CD8-positive, alpha-beta T cell (primary cell): ENCODE measurements at regions of chr1 and their contacts with region 1.

Region 1: DNA sequence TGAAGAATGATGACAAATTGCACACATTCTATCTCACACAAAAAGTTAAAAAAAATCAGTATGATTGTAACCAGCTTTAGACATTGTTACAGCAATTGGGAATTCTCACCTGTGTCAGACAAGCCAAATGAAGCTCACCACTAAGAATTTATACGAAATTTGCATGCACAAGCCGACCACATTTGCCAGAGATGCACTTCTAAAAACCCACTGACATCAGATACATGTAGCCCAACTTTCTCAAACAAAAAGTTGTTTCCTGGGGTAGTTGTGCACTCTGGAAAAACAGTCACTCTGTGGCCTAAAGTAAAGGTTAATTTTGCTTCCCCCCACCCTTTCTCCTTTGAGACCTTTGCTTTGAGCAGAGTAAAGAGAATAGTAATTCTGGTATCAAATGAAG is 67.9 kb upstream of the IL12RB2 start:
- DNase-seq: no peak
- ATAC-seq: no peak
- H3K4me3 ChIP-seq: no peak overlapping the region
- H3K4me3 Mint-ChIP-seq: no peak overlapping the region
- H3K27ac ChIP-seq: no peak overlapping the region
- H3K27ac Mint-ChIP-seq: no peak overlapping the region
- H3K4me1 ChIP-seq: no peaks in the 10 kb centered on the region
- H3K4me1 Mint-ChIP-seq: no peaks in the 10 kb centered on the region
- H3K27me3 ChIP-seq: no peaks in the 10 kb centered on the region
- H3K27me3 Mint-ChIP-seq: no peaks in the 10 kb centered on the region
- CTCF ChIP-seq: no peak

Region 2: GRCh38 chr1:67256291-67257172 is 16.8 kb after region 1 on chr1:
- CTCF ChIA-PET with region 1: interaction called, 3 read pairs
- POLR2A ChIA-PET with region 1: no interaction called
- intact Hi-C with region 1: loop called in 1 of 2 experiments (anchors 2 kb)
- DNase-seq: no peak
- ATAC-seq: no peak
- H3K4me3 ChIP-seq: no peak overlapping the region
- H3K4me3 Mint-ChIP-seq: no peak overlapping the region
- H3K27ac ChIP-seq: no peak overlapping the region
- H3K27ac Mint-ChIP-seq: no peak overlapping the region
- H3K4me1 ChIP-seq: no peaks in the 10 kb centered on the region
- H3K4me1 Mint-ChIP-seq: peaks cover 2% of the 10 kb centered on the region
- H3K27me3 ChIP-seq: no peaks in the 10 kb centered on the region
- H3K27me3 Mint-ChIP-seq: no peaks in the 10 kb centered on the region
- CTCF ChIP-seq: no peak